Caco-2 (cell line): ENCODE measurements at regions of chr2 and their contacts with region 1.

Region 1: DNA sequence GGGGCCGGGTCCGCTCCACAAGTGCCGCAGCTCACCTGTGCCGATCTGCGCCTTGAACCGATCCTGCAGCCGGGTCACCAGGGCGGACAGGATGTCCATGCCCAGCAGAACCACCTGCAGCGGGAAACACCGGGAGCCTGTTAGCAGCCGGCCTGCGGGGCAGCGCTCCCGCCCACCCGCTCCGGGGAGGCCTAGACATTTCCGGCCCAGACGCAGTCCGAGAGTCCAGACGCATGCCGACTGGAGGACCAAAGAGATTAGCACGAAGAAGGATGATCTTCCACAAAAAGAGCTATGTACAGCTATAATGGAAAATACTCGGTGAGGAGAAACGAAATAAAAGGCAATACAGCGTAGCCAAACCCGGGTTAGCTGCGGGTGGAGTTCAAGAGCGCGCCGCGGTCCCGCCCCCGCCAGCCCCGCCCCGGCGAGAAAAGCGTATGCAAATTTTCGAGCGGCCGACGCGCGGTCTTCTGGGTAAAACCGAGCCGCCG is 421 bp upstream of the RNU4ATAC start:
- DNase-seq: peak; percentile 83 to 85
- H3K4me3 ChIP-seq: peak overlapping the region; percentile 51
- H3K4me3 Mint-ChIP-seq: peak overlapping the region; percentile 92
- H3K27ac Mint-ChIP-seq: peak overlapping the region; percentile 97
- H3K4me1 ChIP-seq: peaks cover 10% of the 10 kb centered on the region
- H3K4me1 Mint-ChIP-seq: peaks cover 20% of the 10 kb centered on the region
- H3K27me3 ChIP-seq: no peaks in the 10 kb centered on the region
- H3K27me3 Mint-ChIP-seq: no peaks in the 10 kb centered on the region
- CTCF ChIP-seq: no peak

Region 2: GRCh38 chr2:120223034-120223912 is 1307.0 kb before region 1 on chr2 and contains the start of gene TMEM185B:
- CTCF ChIA-PET with region 1: no interaction called
- POLR2A ChIA-PET with region 1: no interaction called
- intact Hi-C with region 1: loop called (anchors 2 kb)
- DNase-seq: peak; percentile 96 to 98
- H3K4me3 ChIP-seq: peak within 1 kb of the TSS; percentile 76
- H3K4me3 Mint-ChIP-seq: peak within 1 kb of the TSS; percentile 97
- H3K27ac Mint-ChIP-seq: peak within 1 kb of the TSS; percentile 96
- H3K4me1 ChIP-seq: peaks cover 23% of the 10 kb centered on the region
- H3K4me1 Mint-ChIP-seq: peaks cover 17% of the 10 kb centered on the region
- H3K27me3 ChIP-seq: no peaks in the 10 kb centered on the region
- H3K27me3 Mint-ChIP-seq: no peaks in the 10 kb centered on the region
- CTCF ChIP-seq: peak; percentile 54 to 77
- total RNA-seq, gene TMEM185B: 67.3 and 69.9 TPM in 2 replicates

Region 3: DNA sequence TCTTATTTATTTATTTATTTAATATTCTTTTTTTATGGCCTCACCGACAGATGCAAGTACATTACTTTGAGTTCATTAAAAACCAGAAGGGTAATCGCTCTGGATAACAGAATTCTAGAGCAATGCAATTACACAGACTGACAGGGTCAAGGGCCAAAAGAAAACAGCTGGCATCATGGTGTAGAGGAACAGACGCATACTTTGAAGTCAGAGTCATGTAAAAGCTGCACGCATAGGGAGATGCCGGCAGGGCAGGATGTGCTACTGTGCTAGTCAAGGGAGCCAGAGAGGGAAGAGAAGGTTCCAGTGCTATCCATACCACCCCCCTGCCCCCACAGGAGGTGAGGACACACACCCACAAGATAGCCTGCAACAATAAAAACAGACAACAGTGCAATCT is 130.1 kb before region 1 on chr2:
- CTCF ChIA-PET with region 1: interaction called, 9 read pairs
- POLR2A ChIA-PET with region 1: no interaction called
- intact Hi-C with region 1: loop called (anchors 2 kb)
- DNase-seq: no peak
- H3K4me3 ChIP-seq: no peak overlapping the region
- H3K4me3 Mint-ChIP-seq: no peak overlapping the region
- H3K27ac Mint-ChIP-seq: no peak overlapping the region
- H3K4me1 ChIP-seq: no peaks in the 10 kb centered on the region; the same call in 1 of the 2 replicates
- H3K4me1 Mint-ChIP-seq: no peaks in the 10 kb centered on the region
- H3K27me3 ChIP-seq: no peaks in the 10 kb centered on the region
- H3K27me3 Mint-ChIP-seq: no peaks in the 10 kb centered on the region
- CTCF ChIP-seq: no peak

Region 4: DNA sequence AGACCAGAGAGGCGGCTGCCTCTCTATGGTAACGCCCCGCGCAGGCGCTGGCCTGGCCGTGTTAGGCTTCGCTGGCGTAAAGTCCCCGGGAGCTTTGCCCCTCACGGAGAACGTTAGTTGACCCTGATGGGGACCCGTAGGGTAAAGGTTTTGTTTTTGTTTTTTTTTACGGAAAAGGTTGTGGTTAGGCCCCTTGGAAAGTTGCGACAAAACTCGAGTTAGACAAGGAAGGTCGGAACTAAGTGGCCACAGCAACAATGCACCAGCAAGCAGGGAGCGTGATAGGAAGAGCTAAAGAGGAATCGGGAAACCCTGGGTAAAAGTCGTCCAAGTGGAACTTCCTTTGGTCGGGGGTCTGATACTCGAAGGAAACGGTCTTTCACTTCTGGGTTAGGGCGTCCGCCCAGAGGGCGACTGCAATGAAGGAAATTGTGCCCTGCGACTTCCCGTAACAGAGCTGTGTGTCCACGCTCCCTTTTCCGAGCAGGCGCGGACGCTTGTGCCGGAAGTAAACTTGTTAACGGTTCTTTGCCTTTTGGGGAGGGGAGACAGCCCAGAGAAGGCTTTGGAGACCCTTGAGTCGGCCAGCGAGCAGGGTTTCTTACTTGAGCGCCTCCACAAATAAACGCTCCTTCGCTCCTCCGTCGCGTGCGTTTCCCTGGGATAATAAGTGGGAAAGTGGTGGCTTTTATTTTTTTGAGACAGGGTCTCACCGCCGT is 119.5 kb after region 1 on chr2:
- CTCF ChIA-PET with region 1: interaction called, 3 read pairs
- POLR2A ChIA-PET with region 1: interaction called, 7 read pairs
- intact Hi-C with region 1: loop called (anchors 2 kb)
- DNase-seq: peak; percentile 95
- H3K4me3 ChIP-seq: peak overlapping the region; percentile 56
- H3K4me3 Mint-ChIP-seq: peak overlapping the region; percentile 78
- H3K27ac Mint-ChIP-seq: peak overlapping the region; percentile 95
- H3K4me1 ChIP-seq: 0 out of 2 replicates have a peak, but pooled peaks cover 10% of the 10 kb centered on the region
- H3K4me1 Mint-ChIP-seq: peaks cover 15% of the 10 kb centered on the region
- H3K27me3 ChIP-seq: no peaks in the 10 kb centered on the region
- H3K27me3 Mint-ChIP-seq: no peaks in the 10 kb centered on the region
- CTCF ChIP-seq: no peak

Region 5: DNA sequence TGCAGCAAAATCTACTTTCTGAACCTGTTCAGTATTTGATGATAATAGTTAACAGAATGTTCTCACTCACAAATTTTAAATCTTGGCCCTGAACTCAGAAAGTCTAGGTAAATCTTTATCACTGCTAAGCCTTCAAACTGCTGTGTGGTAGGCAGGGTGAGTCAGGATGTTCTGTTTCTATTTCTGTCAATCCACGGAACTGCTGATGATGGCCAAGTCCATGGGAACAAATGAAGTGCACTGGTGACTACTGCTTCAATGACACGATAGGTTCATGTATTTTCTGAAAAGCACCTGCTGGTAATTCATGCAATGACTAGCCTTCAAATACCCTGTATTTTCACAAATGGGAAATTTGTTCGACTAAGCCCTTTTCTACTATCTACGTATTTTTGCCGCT is 192.2 kb after region 1 on chr2:
- CTCF ChIA-PET with region 1: interaction called, 3 read pairs
- POLR2A ChIA-PET with region 1: interaction called, 3 read pairs
- intact Hi-C with region 1: loop called (anchors 1 kb)
- DNase-seq: no peak
- H3K4me3 ChIP-seq: no peak overlapping the region
- H3K4me3 Mint-ChIP-seq: no peak overlapping the region
- H3K27ac Mint-ChIP-seq: no peak overlapping the region
- H3K4me1 ChIP-seq: no peaks in the 10 kb centered on the region
- H3K4me1 Mint-ChIP-seq: no peaks in the 10 kb centered on the region
- H3K27me3 ChIP-seq: no peaks in the 10 kb centered on the region
- H3K27me3 Mint-ChIP-seq: no peaks in the 10 kb centered on the region
- CTCF ChIP-seq: no peak

Region 6: DNA sequence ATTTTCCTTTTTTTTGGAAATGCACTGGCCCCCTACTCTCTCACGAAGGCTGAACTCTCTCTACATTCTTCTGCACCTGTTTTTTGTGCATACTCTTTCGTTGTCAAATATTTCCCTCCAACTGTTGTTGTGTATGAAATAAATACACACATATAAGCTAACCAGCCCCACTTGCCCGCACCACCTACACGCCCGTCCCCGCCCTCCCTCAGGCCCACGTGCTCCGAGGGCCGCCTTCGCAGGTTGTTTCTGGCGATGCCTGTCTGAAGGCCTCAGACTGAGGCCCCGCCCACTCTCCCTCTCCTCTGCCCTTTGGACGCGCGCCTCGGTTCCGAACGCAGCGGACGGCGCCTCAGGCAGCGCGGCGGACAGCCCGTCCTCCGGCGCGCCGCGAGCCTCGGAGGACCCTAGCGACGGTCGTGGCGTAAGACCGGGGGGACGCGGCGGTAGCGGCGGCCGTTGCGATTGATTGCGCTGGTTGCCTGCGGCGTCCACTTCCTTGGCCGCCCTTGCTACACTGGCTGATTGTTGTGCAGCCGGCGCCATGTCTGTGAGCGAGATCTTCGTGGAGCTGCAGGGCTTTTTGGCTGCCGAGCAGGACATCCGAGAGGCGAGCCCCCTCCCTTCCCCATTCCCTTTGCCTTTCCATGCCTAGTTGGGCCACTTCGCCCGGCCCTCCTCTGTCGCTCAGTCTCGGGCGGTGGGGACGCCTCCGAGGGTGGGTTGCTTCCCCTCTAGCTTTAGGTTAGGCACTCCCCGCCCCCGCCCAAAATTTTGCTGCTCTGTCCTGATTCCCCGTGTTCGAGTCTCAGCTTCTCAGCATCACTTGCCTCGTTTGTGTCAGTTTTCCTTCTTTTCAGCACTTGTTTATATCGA is 225.2 kb after region 1 on chr2 and contains the start of gene TSN:
- CTCF ChIA-PET with region 1: no interaction called
- POLR2A ChIA-PET with region 1: no interaction called
- intact Hi-C with region 1: loop called (anchors 1 kb)
- DNase-seq: peak; percentile 98
- H3K4me3 ChIP-seq: peak within 1 kb of the TSS; percentile 90
- H3K4me3 Mint-ChIP-seq: peak within 1 kb of the TSS; percentile 77
- H3K27ac Mint-ChIP-seq: peak within 1 kb of the TSS; percentile 82
- H3K4me1 ChIP-seq: peaks cover 7% of the 10 kb centered on the region; the same call in 1 of the 2 replicates
- H3K4me1 Mint-ChIP-seq: peaks cover 5% of the 10 kb centered on the region
- H3K27me3 ChIP-seq: no peaks in the 10 kb centered on the region
- H3K27me3 Mint-ChIP-seq: no peaks in the 10 kb centered on the region
- CTCF ChIP-seq: no peak
- total RNA-seq, gene TSN: 125 and 136 TPM in 2 replicates